Naive thymus-derived CD4-positive, alpha-beta T cell (primary cell): ENCODE measurements at regions of chr11 and their contacts with region 1.

Region 1: DNA sequence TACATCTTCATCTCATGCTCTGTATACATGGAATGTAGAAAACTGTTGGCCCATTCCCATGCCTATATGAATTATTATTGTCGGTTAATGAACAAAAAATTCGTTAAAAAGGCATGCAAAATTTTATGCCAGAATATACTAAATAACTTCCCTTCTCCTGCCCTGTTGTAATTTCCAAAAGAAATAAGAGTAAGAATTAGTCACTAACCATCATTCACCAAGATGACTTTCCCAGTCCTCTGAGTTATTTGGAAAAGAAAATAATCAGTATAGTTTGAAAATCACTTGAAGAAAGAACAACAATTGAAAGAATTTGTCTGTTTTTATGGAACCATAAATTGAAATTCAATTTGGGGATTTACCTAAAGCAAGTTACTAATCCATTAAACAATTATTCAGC is 1149.1 kb upstream of the RAG2 start:
- DNase-seq: no peak
- ATAC-seq: no peak
- H3K4me3 ChIP-seq: no peak overlapping the region
- H3K4me3 Mint-ChIP-seq: no peak overlapping the region
- H3K27ac ChIP-seq: no peak overlapping the region
- H3K27ac Mint-ChIP-seq: no peak overlapping the region
- H3K4me1 ChIP-seq: no peaks in the 10 kb centered on the region
- H3K4me1 Mint-ChIP-seq: no peaks in the 10 kb centered on the region
- H3K27me3 ChIP-seq: no peaks in the 10 kb centered on the region
- H3K27me3 Mint-ChIP-seq: no peaks in the 10 kb centered on the region

Region 2: DNA sequence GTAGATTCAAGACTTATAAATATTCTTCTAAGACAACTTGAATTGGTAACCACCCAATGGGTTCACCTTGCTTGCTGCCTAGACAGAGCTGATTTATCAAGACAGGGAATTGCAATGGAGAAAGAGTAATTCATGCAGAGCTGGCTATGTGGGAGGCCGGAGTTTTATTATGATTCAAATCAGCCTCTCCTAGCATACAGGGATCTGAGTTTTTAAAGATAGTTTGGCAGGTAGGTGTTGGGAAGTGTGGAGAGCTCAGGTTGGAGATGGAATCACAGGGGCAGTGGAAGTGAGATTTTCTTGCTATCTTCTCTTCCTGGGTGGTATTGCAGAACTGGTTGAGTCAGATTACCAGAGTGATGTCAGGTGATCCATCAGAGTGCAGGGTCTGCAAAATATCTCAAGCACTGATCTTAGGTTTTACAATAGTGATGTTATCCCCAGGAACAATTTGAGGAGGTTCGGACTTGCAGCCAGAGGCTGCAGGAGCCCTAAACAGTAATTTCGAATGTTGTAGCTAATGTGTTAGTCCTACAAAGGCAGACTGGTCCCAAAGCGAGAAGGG is 299.5 kb after region 1 on chr11:
- CTCF ChIA-PET with region 1: no interaction called
- POLR2A ChIA-PET with region 1: no interaction called
- intact Hi-C with region 1: loop called in 1 of 2 experiments (anchors 5 kb)
- DNase-seq: no peak
- ATAC-seq: no peak
- H3K4me3 ChIP-seq: no peak overlapping the region
- H3K4me3 Mint-ChIP-seq: no peak overlapping the region
- H3K27ac ChIP-seq: no peak overlapping the region
- H3K27ac Mint-ChIP-seq: no peak overlapping the region
- H3K4me1 ChIP-seq: no peaks in the 10 kb centered on the region
- H3K4me1 Mint-ChIP-seq: no peaks in the 10 kb centered on the region
- H3K27me3 ChIP-seq: no peaks in the 10 kb centered on the region
- H3K27me3 Mint-ChIP-seq: no peaks in the 10 kb centered on the region

Region 3: GRCh38 chr11:38356255-38356654 is 609.1 kb after region 1 on chr11:
- CTCF ChIA-PET with region 1: no interaction called
- POLR2A ChIA-PET with region 1: no interaction called
- intact Hi-C with region 1: no loop called
- DNase-seq: no peak
- ATAC-seq: no peak
- H3K4me3 ChIP-seq: no peak overlapping the region
- H3K4me3 Mint-ChIP-seq: no peak overlapping the region
- H3K27ac ChIP-seq: no peak overlapping the region
- H3K27ac Mint-ChIP-seq: no peak overlapping the region
- H3K4me1 ChIP-seq: no peaks in the 10 kb centered on the region
- H3K4me1 Mint-ChIP-seq: no peaks in the 10 kb centered on the region
- H3K27me3 ChIP-seq: no peaks in the 10 kb centered on the region
- H3K27me3 Mint-ChIP-seq: no peaks in the 10 kb centered on the region